K562 (cell line): ENCODE measurements at regions of chr1 and their contacts with region 1.

Region 1: DNA sequence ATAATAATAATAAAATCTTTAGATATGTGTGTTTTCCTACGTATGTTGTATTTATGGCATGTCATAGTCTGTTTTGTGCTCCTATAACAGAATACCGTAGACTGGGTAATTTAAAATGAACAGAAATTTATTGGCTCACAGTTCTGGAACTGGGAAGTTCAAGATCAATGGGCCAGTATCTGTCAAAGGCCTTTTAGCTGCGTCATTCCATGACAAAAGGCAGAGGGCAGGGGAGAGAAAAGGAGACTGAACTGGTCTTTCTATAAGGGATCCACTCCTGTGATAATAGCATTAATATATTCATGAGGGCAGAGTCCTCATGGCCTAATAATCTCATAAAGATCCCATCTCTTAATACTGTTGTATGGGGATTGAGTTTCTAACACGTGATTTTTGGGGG is 7.1 kb upstream of the SFT2D2 start:
- DNase-seq: peak in 2 of 4 experiments; percentile 40 to 57
- ATAC-seq: peak; percentile 62
- H3K4me3 ChIP-seq: peak overlapping the region; percentile 33; the same call in 1 of the 2 replicates
- H3K27ac ChIP-seq: peak overlapping the region; percentile 65
- H3K4me1 ChIP-seq: peaks cover 5 to 26% of the 10 kb centered on the region in 2 experiments; a peak in 3 of 5 replicates
- H3K27me3 ChIP-seq: no peaks in the 10 kb centered on the region
- CTCF ChIP-seq: no peak
- EP300 ChIP-seq: no peak
- POLR2A ChIP-seq: no peak
- RAD21 ChIP-seq: no peak

Region 2: GRCh38 chr1:168234846-168235547 is 16.3 kb after region 1 on chr1:
- CTCF ChIA-PET with region 1: no interaction called
- POLR2A ChIA-PET with region 1: interaction called, 13 read pairs
- in situ Hi-C with region 1: no loop called
- intact Hi-C with region 1: no loop called
- DNase-seq: peak; percentile 67 to 78 (median 74)
- ATAC-seq: peak; percentile 99
- H3K4me3 ChIP-seq: no peak overlapping the region
- H3K27ac ChIP-seq: no peak overlapping the region
- H3K4me1 ChIP-seq: no peaks in the 10 kb centered on the region
- H3K27me3 ChIP-seq: no peaks in the 10 kb centered on the region
- CTCF ChIP-seq: peak; percentile 86 to 89 (median 88)
- EP300 ChIP-seq: no peak
- POLR2A ChIP-seq: no peak
- RAD21 ChIP-seq: peak; percentile 78 to 92

Region 3: DNA sequence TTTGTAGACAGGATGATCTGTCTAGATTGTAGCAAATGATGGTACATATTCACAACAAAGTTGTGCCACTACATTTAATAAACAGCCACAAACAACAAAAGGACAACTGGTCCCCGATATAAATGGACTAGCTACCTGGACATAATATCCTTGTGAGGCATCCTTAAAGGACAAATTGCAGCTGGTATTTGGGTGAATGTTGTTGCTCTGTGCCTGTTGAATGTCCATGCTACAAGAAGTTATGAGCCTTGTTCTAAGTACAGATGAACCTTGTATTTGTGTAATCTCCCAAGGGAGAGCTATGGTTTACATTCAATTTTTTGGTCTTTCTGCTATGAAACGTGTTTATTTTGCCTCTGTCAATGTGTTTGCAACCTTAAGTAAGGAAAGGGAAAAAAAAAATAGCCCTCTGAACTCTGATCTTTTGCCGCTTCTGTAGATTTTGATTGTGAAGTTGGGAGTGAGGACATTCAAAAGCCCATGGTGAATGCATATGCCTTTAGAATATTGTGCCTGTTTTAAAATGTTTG is 33.6 kb after region 1 on chr1:
- CTCF ChIA-PET with region 1: no interaction called
- POLR2A ChIA-PET with region 1: no interaction called
- in situ Hi-C with region 1: no loop called
- intact Hi-C with region 1: no loop called
- DNase-seq: no peak
- ATAC-seq: no peak
- H3K4me3 ChIP-seq: no peak overlapping the region
- H3K27ac ChIP-seq: no peak overlapping the region
- H3K4me1 ChIP-seq: no peaks in the 10 kb centered on the region
- H3K27me3 ChIP-seq: no peaks in the 10 kb centered on the region
- CTCF ChIP-seq: no peak
- EP300 ChIP-seq: no peak
- POLR2A ChIP-seq: no peak
- RAD21 ChIP-seq: no peak